GM12878 (cell line): ENCODE measurements at regions of chr12 and their contacts with region 1.

Region 1: GRCh38 chr12:69070319-69071090 is 137.5 kb upstream of the CPM start:
- DNase-seq: no peak
- ATAC-seq: peak; percentile 98
- H3K4me3 ChIP-seq: no peak overlapping the region
- H3K27ac ChIP-seq: no peak overlapping the region
- H3K4me1 ChIP-seq: no peaks in the 10 kb centered on the region
- H3K27me3 ChIP-seq: peaks cover 0 to 3% of the 10 kb centered on the region in 2 experiments; a peak in 1 of 4 replicates
- CTCF ChIP-seq: peak; percentile 93 to 95 (median 94)
- EP300 ChIP-seq: no peak
- POLR2A ChIP-seq: no peak
- RAD21 ChIP-seq: peak; percentile 92

Region 2: DNA sequence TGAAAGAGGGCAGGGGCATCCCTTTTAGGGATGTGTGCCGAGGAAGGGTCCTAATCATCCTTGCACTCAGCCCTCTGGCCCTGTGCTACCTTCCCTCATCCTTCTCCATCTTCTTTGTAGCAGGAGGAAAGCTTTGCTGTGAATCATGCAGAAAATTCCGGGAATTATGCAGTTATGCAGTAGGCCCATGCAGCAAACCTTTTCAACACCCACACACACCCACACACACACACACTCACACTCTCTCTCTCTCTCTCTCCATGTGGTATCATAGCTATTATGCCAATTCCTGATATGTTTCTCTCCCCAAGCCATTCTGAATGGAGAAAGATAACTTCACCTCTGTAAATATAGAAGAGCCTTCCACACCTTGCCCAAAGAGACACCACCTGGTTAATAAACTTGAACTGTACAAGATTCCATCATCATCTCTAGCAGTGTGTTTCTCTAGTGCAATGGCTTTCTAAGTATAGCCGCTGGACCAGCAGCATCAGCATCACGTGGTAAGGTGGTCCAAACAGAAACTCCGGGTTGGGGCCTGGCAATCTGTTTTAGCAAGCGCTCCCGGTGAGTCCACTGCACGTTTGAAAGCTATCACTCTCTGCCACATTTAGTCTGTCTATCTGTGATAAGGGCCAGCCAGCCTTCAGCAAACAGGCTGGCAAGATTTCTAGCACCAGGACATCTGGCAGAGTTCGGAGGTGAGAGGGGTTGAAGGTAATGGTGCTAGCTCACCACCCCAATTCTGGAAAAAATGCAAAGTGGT is 204.9 kb before region 1 on chr12:
- CTCF ChIA-PET with region 1: interaction called, 45 read pairs
- POLR2A ChIA-PET with region 1: no interaction called
- RAD21 ChIA-PET with region 1: interaction called, 6 read pairs
- SMC1A ChIA-PET with region 1: interaction called, 12 read pairs
- in situ Hi-C with region 1: loop called (anchors 5 kb)
- intact Hi-C with region 1: loop called (anchors 1 kb)
- DNase-seq: no peak
- ATAC-seq: no peak
- H3K4me3 ChIP-seq: no peak overlapping the region
- H3K27ac ChIP-seq: no peak overlapping the region
- H3K4me1 ChIP-seq: no peaks in the 10 kb centered on the region
- H3K27me3 ChIP-seq: no peaks in the 10 kb centered on the region
- CTCF ChIP-seq: no peak
- EP300 ChIP-seq: no peak
- POLR2A ChIP-seq: no peak
- RAD21 ChIP-seq: no peak

Region 3: DNA sequence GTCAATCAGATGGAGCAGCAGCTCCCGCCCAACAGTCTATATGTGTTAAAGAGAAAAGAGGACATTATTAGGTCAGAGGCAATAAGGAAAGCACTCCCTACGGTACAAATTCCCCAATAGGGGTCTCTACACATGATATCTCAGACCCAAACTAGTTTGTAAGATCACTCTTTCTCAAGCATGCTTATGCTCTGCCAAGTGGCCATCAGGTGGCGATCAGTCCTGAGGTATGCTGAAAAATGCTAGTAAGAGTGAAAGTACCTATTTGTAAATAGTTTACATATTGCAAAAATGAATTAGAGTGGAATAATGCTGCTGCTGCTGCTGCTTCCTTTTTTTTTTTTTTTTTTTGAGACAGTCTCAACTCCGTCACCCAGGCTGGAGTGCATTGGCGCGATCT is 198.6 kb before region 1 on chr12:
- CTCF ChIA-PET with region 1: interaction called, 23 read pairs
- POLR2A ChIA-PET with region 1: no interaction called
- RAD21 ChIA-PET with region 1: no interaction called
- SMC1A ChIA-PET with region 1: interaction called, 8 read pairs
- in situ Hi-C with region 1: loop called (anchors 5 kb)
- intact Hi-C with region 1: no loop called
- DNase-seq: no peak
- ATAC-seq: peak; percentile 62; the same call in 2 of the 3 replicates
- H3K4me3 ChIP-seq: no peak overlapping the region
- H3K27ac ChIP-seq: no peak overlapping the region
- H3K4me1 ChIP-seq: no peaks in the 10 kb centered on the region
- H3K27me3 ChIP-seq: no peaks in the 10 kb centered on the region
- CTCF ChIP-seq: peak; percentile 29 to 48 (median 37); a peak in 4 of 6 replicates
- EP300 ChIP-seq: no peak
- POLR2A ChIP-seq: no peak
- RAD21 ChIP-seq: peak; percentile 52

Region 4: GRCh38 chr12:69024413-69024812 is 46.1 kb before region 1 on chr12:
- CTCF ChIA-PET with region 1: no interaction called
- POLR2A ChIA-PET with region 1: no interaction called
- RAD21 ChIA-PET with region 1: no interaction called
- SMC1A ChIA-PET with region 1: no interaction called
- in situ Hi-C with region 1: no loop called
- intact Hi-C with region 1: no loop called
- DNase-seq: no peak
- ATAC-seq: no peak
- H3K4me3 ChIP-seq: no peak overlapping the region
- H3K27ac ChIP-seq: no peak overlapping the region
- H3K4me1 ChIP-seq: no peaks in the 10 kb centered on the region
- H3K27me3 ChIP-seq: no peaks in the 10 kb centered on the region
- CTCF ChIP-seq: no peak
- EP300 ChIP-seq: no peak
- POLR2A ChIP-seq: no peak
- RAD21 ChIP-seq: no peak

Region 5: DNA sequence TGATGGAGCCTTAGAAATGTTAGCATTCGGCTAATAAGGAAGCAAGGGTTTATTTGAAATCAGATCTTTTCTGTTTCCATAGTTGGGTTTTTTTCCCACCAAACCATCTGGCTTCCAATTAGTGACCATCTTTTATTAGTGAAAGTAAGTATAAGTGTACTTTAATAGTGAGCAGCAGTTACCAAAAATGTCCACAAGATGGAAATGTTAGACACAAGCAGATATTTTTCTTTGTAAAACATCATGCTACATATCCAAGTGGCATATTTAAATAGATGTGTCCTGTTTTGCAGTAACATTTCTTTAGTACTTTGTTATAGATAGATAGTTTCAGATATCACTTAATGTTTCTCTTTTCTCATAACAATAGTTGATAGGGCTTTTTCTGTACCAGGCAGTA is 317.9 kb after region 1 on chr12:
- CTCF ChIA-PET with region 1: no interaction called
- POLR2A ChIA-PET with region 1: no interaction called
- RAD21 ChIA-PET with region 1: no interaction called
- SMC1A ChIA-PET with region 1: no interaction called
- in situ Hi-C with region 1: no loop called
- intact Hi-C with region 1: no loop called
- DNase-seq: no peak
- ATAC-seq: peak; percentile 60
- H3K4me3 ChIP-seq: no peak overlapping the region
- H3K27ac ChIP-seq: no peak overlapping the region
- H3K4me1 ChIP-seq: no peaks in the 10 kb centered on the region
- H3K27me3 ChIP-seq: no peaks in the 10 kb centered on the region
- CTCF ChIP-seq: peak; percentile 18 to 55 (median 54); a peak in 3 of 6 replicates
- EP300 ChIP-seq: no peak
- POLR2A ChIP-seq: no peak
- RAD21 ChIP-seq: peak; percentile 61

Region 6: DNA sequence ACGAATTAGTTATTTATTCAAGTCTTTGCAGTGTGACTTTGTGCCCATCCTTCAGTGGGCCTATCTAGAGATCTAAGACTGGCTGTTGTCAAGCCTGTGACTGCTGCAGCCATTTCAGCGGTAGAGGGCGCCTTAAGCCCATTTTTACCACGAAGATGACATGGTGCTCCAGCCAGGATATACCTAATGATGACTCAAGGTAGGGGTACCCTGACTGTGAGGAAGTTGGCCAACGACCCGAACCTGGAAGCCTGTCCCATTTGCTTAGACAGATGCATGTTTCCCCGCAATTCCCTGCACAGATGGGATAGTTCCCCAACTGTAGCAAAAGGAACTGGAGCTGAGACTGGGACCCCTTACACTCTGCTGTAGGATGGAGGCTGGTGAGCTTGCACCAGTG is 709.4 kb after region 1 on chr12:
- CTCF ChIA-PET with region 1: no interaction called
- POLR2A ChIA-PET with region 1: no interaction called
- RAD21 ChIA-PET with region 1: no interaction called
- SMC1A ChIA-PET with region 1: no interaction called
- in situ Hi-C with region 1: no loop called
- intact Hi-C with region 1: no loop called
- DNase-seq: no peak
- ATAC-seq: peak; percentile 74
- H3K4me3 ChIP-seq: no peak overlapping the region
- H3K27ac ChIP-seq: no peak overlapping the region
- H3K4me1 ChIP-seq: no peaks in the 10 kb centered on the region
- H3K27me3 ChIP-seq: no peaks in the 10 kb centered on the region
- CTCF ChIP-seq: peak; percentile 24 to 39 (median 39); a peak in 4 of 6 replicates
- EP300 ChIP-seq: no peak
- POLR2A ChIP-seq: no peak
- RAD21 ChIP-seq: peak; percentile 48